Breast epithelium (tissue), 4 donors: ENCODE measurements at regions of chr5 and their contacts with region 1.

Region 1: DNA sequence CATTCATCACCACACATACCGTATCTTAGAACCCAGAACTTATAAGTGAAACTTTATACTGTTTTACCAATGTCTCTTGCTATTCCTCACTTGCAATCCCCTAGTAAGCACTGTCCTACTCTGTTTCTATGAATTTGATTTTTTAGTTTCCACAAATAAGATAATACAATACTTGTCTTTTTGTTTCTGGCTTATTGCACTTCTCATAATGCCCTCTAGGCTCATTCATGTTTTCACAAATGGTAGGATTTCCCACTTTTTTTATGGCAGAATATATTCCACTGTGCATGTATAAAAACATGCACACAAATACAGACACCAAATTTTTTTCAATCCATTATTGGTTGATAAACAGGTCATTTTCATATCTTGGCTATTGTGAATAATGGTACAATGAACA is 1742.3 kb upstream of the NUDT12 start:
- DNase-seq: no peak
- H3K4me3 ChIP-seq: no peak overlapping the region
- H3K27ac ChIP-seq: no peak overlapping the region
- H3K4me1 ChIP-seq: no peaks in the 10 kb centered on the region
- H3K27me3 ChIP-seq: no peaks in the 10 kb centered on the region
- CTCF ChIP-seq: no peak
- POLR2A ChIP-seq: no peak

Region 2: GRCh38 chr5:104734046-104734445 is 570.8 kb before region 1 on chr5:
- intact Hi-C with region 1: loop called (anchors 5 kb)
- DNase-seq: no peak
- H3K4me3 ChIP-seq: no peak overlapping the region
- H3K27ac ChIP-seq: no peak overlapping the region
- H3K4me1 ChIP-seq: no peaks in the 10 kb centered on the region
- H3K27me3 ChIP-seq: no peaks in the 10 kb centered on the region
- CTCF ChIP-seq: no peak
- POLR2A ChIP-seq: no peak

Region 3: GRCh38 chr5:104932431-104932830 is 372.4 kb before region 1 on chr5:
- intact Hi-C with region 1: no loop called
- DNase-seq: no peak
- H3K4me3 ChIP-seq: no peak overlapping the region
- H3K27ac ChIP-seq: no peak overlapping the region
- H3K4me1 ChIP-seq: no peaks in the 10 kb centered on the region
- H3K27me3 ChIP-seq: no peaks in the 10 kb centered on the region
- CTCF ChIP-seq: no peak
- POLR2A ChIP-seq: no peak